ENCODE measurements at regions of chr10 and their contacts with region 1.

Region 1: DNA sequence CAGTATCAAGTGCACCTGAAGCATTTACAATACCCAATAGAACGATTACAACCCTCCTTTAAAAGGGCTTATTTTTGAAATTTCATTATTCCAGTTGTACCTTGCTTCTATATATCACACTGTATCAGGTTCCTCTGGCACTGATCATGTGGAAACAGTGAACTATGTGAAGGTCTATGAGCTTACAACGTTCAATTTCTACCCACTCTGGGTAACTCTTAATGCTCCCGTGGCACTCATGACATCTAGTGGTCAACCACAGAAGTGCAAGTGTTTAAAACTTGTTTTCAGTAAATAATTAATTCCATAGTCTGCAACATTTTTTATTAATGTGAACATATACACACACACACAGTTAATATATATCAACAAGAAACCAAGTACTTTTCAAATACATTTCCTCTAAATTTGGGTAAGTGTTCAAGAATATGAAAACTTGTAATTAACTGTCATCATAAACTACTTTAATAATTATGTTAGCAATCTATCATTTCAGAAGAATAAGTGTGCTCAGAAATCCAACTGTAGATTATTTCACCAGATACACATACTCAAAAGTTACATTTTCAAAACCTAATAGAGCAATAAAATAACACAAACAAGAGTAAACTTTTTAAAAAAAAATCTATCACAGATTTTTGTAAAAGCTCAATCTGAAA is 61.0 kb downstream of the MPP7 start:
- DNase-seq: peak; percentile 28
- ATAC-seq: peak; percentile 81
- H3K4me3 Mint-ChIP-seq: no peak overlapping the region
- H3K27ac Mint-ChIP-seq: no peak overlapping the region
- H3K4me1 Mint-ChIP-seq: peaks cover 4% of the 10 kb centered on the region; the same call in 1 of the 2 replicates
- H3K27me3 Mint-ChIP-seq: no peaks in the 10 kb centered on the region
- CTCF ChIP-seq: peak; percentile 88

Region 2: GRCh38 chr10:27742195-27743011 is 499.5 kb before region 1 on chr10:
- CTCF ChIA-PET with region 1: interaction called, 19 read pairs
- POLR2A ChIA-PET with region 1: no interaction called
- DNase-seq: peak; percentile 83
- ATAC-seq: peak; percentile 42
- H3K4me3 Mint-ChIP-seq: peak overlapping the region; percentile 92
- H3K27ac Mint-ChIP-seq: no peak overlapping the region
- H3K4me1 Mint-ChIP-seq: peaks cover 28% of the 10 kb centered on the region
- H3K27me3 Mint-ChIP-seq: peaks cover 70% of the 10 kb centered on the region
- CTCF ChIP-seq: peak; percentile 32; the same call in 1 of the 2 replicates

Region 3: DNA sequence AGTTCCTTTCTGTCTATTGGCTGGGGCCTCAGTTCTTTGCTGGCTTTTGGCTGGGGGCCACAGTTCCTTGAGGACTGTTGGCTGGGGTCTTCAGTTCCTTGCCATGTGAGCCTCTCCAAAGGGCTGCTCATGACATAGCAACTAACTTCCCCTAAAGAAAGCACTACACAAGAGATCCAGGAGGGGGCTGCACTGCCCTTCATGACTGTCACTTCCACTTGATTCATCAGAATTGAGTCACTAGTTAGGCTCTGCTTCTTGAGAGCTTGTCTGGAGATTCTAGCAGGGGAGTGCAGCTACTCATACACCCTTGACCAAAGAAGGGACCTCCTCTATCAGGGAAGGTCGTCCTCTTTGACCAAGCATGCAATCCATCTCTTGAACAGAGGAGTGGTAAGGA is 458.2 kb before region 1 on chr10:
- CTCF ChIA-PET with region 1: interaction called, 11 read pairs
- POLR2A ChIA-PET with region 1: no interaction called
- DNase-seq: peak; percentile 54
- ATAC-seq: peak; percentile 99
- H3K4me3 Mint-ChIP-seq: no peak overlapping the region
- H3K27ac Mint-ChIP-seq: no peak overlapping the region
- H3K4me1 Mint-ChIP-seq: peaks cover 5% of the 10 kb centered on the region
- H3K27me3 Mint-ChIP-seq: no peaks in the 10 kb centered on the region
- CTCF ChIP-seq: 0 out of 2 replicates have a peak, but pooled peaks have one; percentile 27

Region 4: GRCh38 chr10:28186461-28186860 is 55.4 kb before region 1 on chr10:
- CTCF ChIA-PET with region 1: no interaction called
- POLR2A ChIA-PET with region 1: no interaction called
- DNase-seq: no peak
- ATAC-seq: no peak
- H3K4me3 Mint-ChIP-seq: no peak overlapping the region
- H3K27ac Mint-ChIP-seq: no peak overlapping the region
- H3K4me1 Mint-ChIP-seq: peaks cover 4% of the 10 kb centered on the region; the same call in 1 of the 2 replicates
- H3K27me3 Mint-ChIP-seq: no peaks in the 10 kb centered on the region
- CTCF ChIP-seq: no peak

Region 5: GRCh38 chr10:28393966-28394568 is 152.2 kb after region 1 on chr10:
- CTCF ChIA-PET with region 1: interaction called, 10 read pairs
- POLR2A ChIA-PET with region 1: no interaction called
- DNase-seq: peak; percentile 76
- ATAC-seq: peak; percentile 98
- H3K4me3 Mint-ChIP-seq: no peak overlapping the region
- H3K27ac Mint-ChIP-seq: no peak overlapping the region
- H3K4me1 Mint-ChIP-seq: peaks cover 2% of the 10 kb centered on the region; the same call in 1 of the 2 replicates
- H3K27me3 Mint-ChIP-seq: no peaks in the 10 kb centered on the region
- CTCF ChIP-seq: peak; percentile 90